Endothelial cell of umbilical vein (primary cell): ENCODE measurements at regions of chr3 and their contacts with region 1.

Region 1: GRCh38 chr3:58874795-58875194 is 175.0 kb downstream of the CFAP20DC start:
- DNase-seq: no peak
- H3K4me3 ChIP-seq: no peak overlapping the region
- H3K27ac ChIP-seq: peak overlapping the region; percentile 84
- H3K4me1 ChIP-seq: peaks cover 21% of the 10 kb centered on the region
- H3K27me3 ChIP-seq: no peaks in the 10 kb centered on the region
- CTCF ChIP-seq: no peak
- POLR2A ChIP-seq: no peak

Region 2: GRCh38 chr3:58833491-58833890 is 41.3 kb before region 1 on chr3:
- CTCF ChIA-PET with region 1: no interaction called
- POLR2A ChIA-PET with region 1: no interaction called
- dilution Hi-C with region 1: no loop called
- intact Hi-C with region 1: loop called (anchors 5 kb)
- DNase-seq: no peak
- H3K4me3 ChIP-seq: no peak overlapping the region
- H3K27ac ChIP-seq: peak overlapping the region; percentile 36
- H3K4me1 ChIP-seq: peaks cover 16% of the 10 kb centered on the region
- H3K27me3 ChIP-seq: no peaks in the 10 kb centered on the region
- CTCF ChIP-seq: no peak
- POLR2A ChIP-seq: no peak